Mammary epithelial cell (primary cell): ENCODE measurements at regions of chr1 and their contacts with region 1.

Region 1: DNA sequence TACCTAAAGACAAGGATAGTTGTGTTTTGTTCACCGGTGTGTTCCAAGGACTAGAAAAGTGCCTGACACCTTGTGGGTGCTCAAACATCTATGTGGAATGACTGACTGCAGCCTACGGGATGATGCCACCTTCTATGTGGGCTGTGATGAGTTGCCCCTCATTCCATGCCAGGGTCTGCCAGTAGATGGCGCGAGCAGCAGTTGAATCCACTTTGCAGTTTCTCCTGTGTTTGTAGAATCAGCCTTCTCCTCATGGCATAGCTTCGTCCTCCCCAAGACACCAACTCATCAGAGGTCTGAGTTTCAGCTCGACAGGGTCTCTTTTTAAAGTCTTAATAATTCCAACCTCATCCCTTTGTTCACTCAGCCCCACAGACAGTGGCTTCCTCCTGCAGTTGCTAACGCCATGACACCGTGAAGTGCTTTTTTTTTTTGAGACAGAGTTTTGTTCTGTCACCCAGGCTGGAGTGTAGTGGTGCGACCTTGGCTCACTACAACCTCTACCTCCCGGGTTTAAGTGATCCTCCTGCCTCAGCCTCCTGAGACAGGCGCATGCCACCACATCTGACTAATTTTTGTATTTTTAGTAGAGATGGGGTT is 133.7 kb downstream of the CAPN8 start:
- DNase-seq: peak; percentile 40
- H3K4me3 ChIP-seq: no peak overlapping the region
- H3K27ac ChIP-seq: no peak overlapping the region
- H3K4me1 ChIP-seq: no peaks in the 10 kb centered on the region
- H3K27me3 ChIP-seq: no peaks in the 10 kb centered on the region
- CTCF ChIP-seq: peak; percentile 80 to 93

Region 2: GRCh38 chr1:223331929-223332328 is 199.9 kb before region 1 on chr1:
- CTCF ChIA-PET with region 1: no interaction called
- dilution Hi-C with region 1: no loop called
- in situ Hi-C with region 1: no loop called
- intact Hi-C with region 1: no loop called
- DNase-seq: peak; percentile 55
- H3K4me3 ChIP-seq: no peak overlapping the region
- H3K27ac ChIP-seq: no peak overlapping the region
- H3K4me1 ChIP-seq: peaks cover 19% of the 10 kb centered on the region
- H3K27me3 ChIP-seq: peaks cover 2% of the 10 kb centered on the region
- CTCF ChIP-seq: no peak

Region 3: DNA sequence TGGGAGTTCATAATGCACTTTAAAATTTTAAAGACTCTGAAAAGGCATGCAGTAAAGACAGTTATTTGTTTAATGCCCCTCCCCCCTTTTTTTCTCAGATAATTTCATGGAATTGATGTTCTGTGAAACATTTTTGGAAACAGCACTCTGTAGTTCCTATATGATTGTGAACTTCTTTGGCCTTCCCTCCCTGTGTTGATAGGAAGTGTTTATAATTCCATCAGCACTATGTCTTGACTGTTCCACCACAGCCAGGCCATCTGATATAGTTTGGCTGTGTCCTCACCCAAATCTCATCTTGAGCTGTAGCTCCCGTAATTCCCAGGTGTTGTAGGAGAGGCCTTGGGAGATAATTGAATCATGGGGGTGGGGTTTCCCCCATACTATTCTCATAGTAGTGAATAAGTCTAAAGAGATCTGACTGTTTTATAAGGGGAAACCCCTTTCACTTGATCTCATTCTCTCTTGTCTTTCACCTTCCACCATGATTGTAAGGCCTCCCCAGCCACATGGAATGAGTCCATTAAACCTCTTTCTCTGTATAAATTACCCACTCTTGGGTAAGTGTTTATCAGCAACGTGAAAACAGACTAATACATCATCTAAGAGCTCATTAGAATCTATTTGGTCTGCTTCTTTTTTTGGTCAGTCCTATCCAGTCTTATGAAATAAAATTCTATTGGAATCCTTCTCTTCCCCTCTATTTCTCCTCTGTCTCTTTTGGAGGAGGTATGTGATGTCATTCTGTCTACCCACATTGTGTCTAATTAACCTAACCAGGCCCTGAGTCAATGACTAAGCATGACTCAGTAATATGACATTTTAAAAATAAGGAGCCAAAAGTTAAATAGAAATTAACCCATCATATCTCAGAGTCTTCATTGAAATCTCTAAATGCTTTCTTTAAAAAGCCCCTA is 129.7 kb before region 1 on chr1:
- CTCF ChIA-PET with region 1: no interaction called
- dilution Hi-C with region 1: no loop called
- in situ Hi-C with region 1: no loop called
- intact Hi-C with region 1: no loop called
- DNase-seq: peak; percentile 79
- H3K4me3 ChIP-seq: no peak overlapping the region
- H3K27ac ChIP-seq: no peak overlapping the region
- H3K4me1 ChIP-seq: peaks cover 14% of the 10 kb centered on the region
- H3K27me3 ChIP-seq: no peaks in the 10 kb centered on the region
- CTCF ChIP-seq: no peak

Region 4: GRCh38 chr1:223466151-223466550 is 65.7 kb before region 1 on chr1:
- CTCF ChIA-PET with region 1: no interaction called
- dilution Hi-C with region 1: no loop called
- in situ Hi-C with region 1: no loop called
- intact Hi-C with region 1: no loop called
- DNase-seq: no peak
- H3K4me3 ChIP-seq: no peak overlapping the region
- H3K27ac ChIP-seq: no peak overlapping the region
- H3K4me1 ChIP-seq: no peaks in the 10 kb centered on the region
- H3K27me3 ChIP-seq: no peaks in the 10 kb centered on the region
- CTCF ChIP-seq: no peak

Region 5: GRCh38 chr1:223479718-223480425 is 52.0 kb before region 1 on chr1:
- CTCF ChIA-PET with region 1: no interaction called
- dilution Hi-C with region 1: loop called (anchors 5 kb)
- in situ Hi-C with region 1: no loop called
- intact Hi-C with region 1: no loop called
- DNase-seq: no peak
- H3K4me3 ChIP-seq: no peak overlapping the region
- H3K27ac ChIP-seq: no peak overlapping the region
- H3K4me1 ChIP-seq: no peaks in the 10 kb centered on the region
- H3K27me3 ChIP-seq: no peaks in the 10 kb centered on the region
- CTCF ChIP-seq: no peak

Region 6: DNA sequence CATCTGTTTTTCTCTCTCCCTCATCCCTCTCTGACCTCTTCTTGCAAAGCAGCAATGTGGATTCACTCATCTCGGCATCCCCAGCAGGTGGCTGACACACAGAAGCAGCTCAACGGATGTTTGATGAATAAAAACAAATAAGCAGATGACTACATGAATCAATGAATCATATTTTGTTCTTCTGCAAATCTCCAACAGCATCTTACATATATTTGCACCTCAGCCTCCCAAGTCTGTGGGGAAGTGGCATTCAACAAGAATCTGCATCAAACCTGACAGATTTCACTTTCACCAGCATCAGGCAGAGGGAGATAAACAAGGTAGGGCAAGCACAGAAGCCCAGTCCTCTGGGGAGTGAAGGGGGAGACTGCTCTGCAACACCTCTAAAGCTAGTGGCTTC is 99.6 kb after region 1 on chr1:
- CTCF ChIA-PET with region 1: no interaction called
- dilution Hi-C with region 1: loop called (anchors 5 kb)
- in situ Hi-C with region 1: no loop called
- intact Hi-C with region 1: no loop called
- DNase-seq: no peak
- H3K4me3 ChIP-seq: no peak overlapping the region
- H3K27ac ChIP-seq: no peak overlapping the region
- H3K4me1 ChIP-seq: no peaks in the 10 kb centered on the region
- H3K27me3 ChIP-seq: no peaks in the 10 kb centered on the region
- CTCF ChIP-seq: no peak

Region 7: GRCh38 chr1:223683586-223684487 is 152.0 kb after region 1 on chr1:
- CTCF ChIA-PET with region 1: no interaction called
- dilution Hi-C with region 1: no loop called
- in situ Hi-C with region 1: no loop called
- intact Hi-C with region 1: loop called (anchors 1 kb)
- DNase-seq: peak; percentile 54
- H3K4me3 ChIP-seq: no peak overlapping the region
- H3K27ac ChIP-seq: no peak overlapping the region
- H3K4me1 ChIP-seq: no peaks in the 10 kb centered on the region
- H3K27me3 ChIP-seq: no peaks in the 10 kb centered on the region
- CTCF ChIP-seq: peak; percentile 69 to 72